HepG2 (cell line): ENCODE measurements at regions of chr5 and their contacts with region 1.

Region 1: GRCh38 chr5:79702606-79703382 is 13.2 kb downstream of the CMYA5 start:
- DNase-seq: peak; percentile 10
- ATAC-seq: peak; percentile 76
- H3K4me3 ChIP-seq: no peak overlapping the region
- H3K27ac ChIP-seq: no peak overlapping the region
- H3K4me1 ChIP-seq: no peaks in the 10 kb centered on the region
- H3K27me3 ChIP-seq: no peaks in the 10 kb centered on the region
- CTCF ChIP-seq: peak; percentile 67
- EP300 ChIP-seq: no peak
- POLR2A ChIP-seq: no peak
- RAD21 ChIP-seq: peak; percentile 46

Region 2: GRCh38 chr5:79774171-79774854 is 71.5 kb after region 1 on chr5:
- CTCF ChIA-PET with region 1: interaction called, 30 read pairs
- POLR2A ChIA-PET with region 1: interaction called, 3 read pairs
- in situ Hi-C with region 1: loop called (anchors 5 kb)
- intact Hi-C with region 1: loop called (anchors 5 kb)
- DNase-seq: peak; percentile 79
- ATAC-seq: peak; percentile 100
- H3K4me3 ChIP-seq: no peak overlapping the region
- H3K27ac ChIP-seq: no peak overlapping the region
- H3K4me1 ChIP-seq: peaks cover 22% of the 10 kb centered on the region
- H3K27me3 ChIP-seq: no peaks in the 10 kb centered on the region
- CTCF ChIP-seq: peak; percentile 86
- EP300 ChIP-seq: no peak
- POLR2A ChIP-seq: no peak
- RAD21 ChIP-seq: peak; percentile 93

Region 3: DNA sequence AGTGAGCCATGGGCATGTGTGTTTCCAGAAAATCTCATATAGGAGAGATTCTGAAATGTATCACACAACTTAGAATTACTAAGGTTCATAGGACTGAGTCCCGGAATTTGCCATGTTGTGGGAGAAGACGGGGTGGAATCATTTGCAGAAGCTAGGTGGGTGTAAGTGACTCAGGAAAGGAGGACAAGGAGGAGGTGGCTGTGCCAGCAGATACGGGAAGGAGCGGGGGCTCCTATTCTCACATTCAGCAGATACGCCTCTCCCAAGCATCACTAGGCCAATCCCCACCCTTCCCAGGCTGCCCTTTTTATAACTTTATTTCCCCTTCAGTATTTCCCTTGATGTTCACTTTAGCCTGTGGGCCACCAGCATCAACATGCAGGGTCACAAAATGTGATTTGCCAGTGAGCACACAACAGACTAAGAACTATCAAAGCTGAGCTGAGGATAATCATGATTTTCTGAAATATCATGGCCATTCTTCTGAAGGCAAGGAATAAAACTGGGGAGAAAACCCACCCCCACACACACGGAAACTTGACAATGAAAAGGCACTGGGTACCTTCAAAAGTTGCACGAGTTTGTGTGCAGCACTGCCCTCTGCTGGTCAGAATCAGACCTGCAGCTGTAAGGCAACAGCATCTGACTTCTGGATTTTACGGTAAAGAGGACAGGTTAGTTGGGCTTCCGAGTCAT is 155.1 kb after region 1 on chr5:
- CTCF ChIA-PET with region 1: interaction called, 12 read pairs
- POLR2A ChIA-PET with region 1: no interaction called
- in situ Hi-C with region 1: loop called (anchors 10 kb)
- intact Hi-C with region 1: no loop called
- DNase-seq: peak; percentile 43
- ATAC-seq: peak; percentile 74
- H3K4me3 ChIP-seq: no peak overlapping the region
- H3K27ac ChIP-seq: no peak overlapping the region
- H3K4me1 ChIP-seq: no peaks in the 10 kb centered on the region
- H3K27me3 ChIP-seq: peaks cover 0 to 10% of the 10 kb centered on the region in 2 experiments; a peak in 2 of 5 replicates
- CTCF ChIP-seq: peak; percentile 90
- EP300 ChIP-seq: no peak
- POLR2A ChIP-seq: no peak
- RAD21 ChIP-seq: peak; percentile 65; the same call in 1 of the 2 replicates